Panc1 (cell line): ENCODE measurements at regions of chr9 and their contacts with region 1.

Region 1: GRCh38 chr9:122264360-122265148 is at the starts of genes MRRF and RBM18:
- DNase-seq: peak; percentile 54
- ATAC-seq: peak; percentile 97
- H3K4me3 ChIP-seq: peak within 1 kb of the TSS; percentile 89 to 90
- H3K27ac ChIP-seq: peak within 1 kb of the TSS; percentile 97
- H3K4me1 ChIP-seq: peaks cover 12% of the 10 kb centered on the region
- H3K27me3 ChIP-seq: no peaks in the 10 kb centered on the region
- CTCF ChIP-seq: no peak
- total RNA-seq, gene MRRF: 28.4 TPM
- total RNA-seq, gene RBM18: 19.2 TPM

Region 2: GRCh38 chr9:121929893-121930875 is 334.4 kb before region 1 on chr9:
- CTCF ChIA-PET with region 1: no interaction called
- POLR2A ChIA-PET with region 1: no interaction called
- in situ Hi-C with region 1: no loop called
- intact Hi-C with region 1: no loop called
- DNase-seq: no peak
- ATAC-seq: no peak
- H3K4me3 ChIP-seq: no peak overlapping the region
- H3K27ac ChIP-seq: no peak overlapping the region
- H3K4me1 ChIP-seq: no peaks in the 10 kb centered on the region
- H3K27me3 ChIP-seq: no peaks in the 10 kb centered on the region; the same call in 1 of the 2 replicates
- CTCF ChIP-seq: no peak; the same call in 1 of the 2 replicates

Region 3: GRCh38 chr9:123119566-123119965 is 855.0 kb after region 1 on chr9:
- CTCF ChIA-PET with region 1: interaction called, 12 read pairs
- POLR2A ChIA-PET with region 1: no interaction called
- in situ Hi-C with region 1: no loop called
- intact Hi-C with region 1: no loop called
- DNase-seq: no peak
- ATAC-seq: no peak
- H3K4me3 ChIP-seq: no peak overlapping the region
- H3K27ac ChIP-seq: no peak overlapping the region
- H3K4me1 ChIP-seq: no peaks in the 10 kb centered on the region
- H3K27me3 ChIP-seq: no peaks in the 10 kb centered on the region
- CTCF ChIP-seq: no peak